ENCODE measurements at regions of chr3 and their contacts with region 1.

Region 1: GRCh38 chr3:138881233-138881632 is 46.5 kb upstream of the PIK3CB start:
- DNase-seq: no peak
- ATAC-seq: no peak
- H3K4me3 ChIP-seq: no peak overlapping the region
- H3K4me3 Mint-ChIP-seq: no peak overlapping the region
- H3K27ac ChIP-seq: no peak overlapping the region
- H3K27ac Mint-ChIP-seq: no peak overlapping the region
- H3K4me1 ChIP-seq: peaks cover 0 to 3% of the 10 kb centered on the region in 2 experiments
- H3K4me1 Mint-ChIP-seq: peaks cover 0 to under 1% (median 0%) of the 10 kb centered on the region in 3 donors
- H3K27me3 ChIP-seq: peaks cover 0 to 3% of the 10 kb centered on the region in 2 experiments
- H3K27me3 Mint-ChIP-seq: no peaks in the 10 kb centered on the region

Region 2: GRCh38 chr3:138437281-138437680 is 444.0 kb before region 1 on chr3:
- CTCF ChIA-PET with region 1: interaction called in 1 of 2 experiments, 11 read pairs
- POLR2A ChIA-PET with region 1: no interaction called
- DNase-seq: no peak
- ATAC-seq: no peak
- H3K4me3 ChIP-seq: no peak overlapping the region
- H3K4me3 Mint-ChIP-seq: no peak overlapping the region
- H3K27ac ChIP-seq: no peak overlapping the region
- H3K27ac Mint-ChIP-seq: no peak overlapping the region
- H3K4me1 ChIP-seq: peaks cover 0 to 22% of the 10 kb centered on the region in 2 experiments
- H3K4me1 Mint-ChIP-seq: peaks cover 0 to 18% (median 16%) of the 10 kb centered on the region in 3 donors
- H3K27me3 ChIP-seq: peaks cover 5 to 60% of the 10 kb centered on the region in 2 experiments
- H3K27me3 Mint-ChIP-seq: peaks cover 37 to 49% of the 10 kb centered on the region in 2 donors

Region 3: GRCh38 chr3:139225548-139225947 is 344.3 kb after region 1 on chr3:
- CTCF ChIA-PET with region 1: no interaction called
- POLR2A ChIA-PET with region 1: no interaction called
- DNase-seq: no peak
- ATAC-seq: no peak
- H3K4me3 ChIP-seq: no peak overlapping the region
- H3K4me3 Mint-ChIP-seq: no peak overlapping the region
- H3K27ac ChIP-seq: no peak overlapping the region
- H3K27ac Mint-ChIP-seq: no peak overlapping the region
- H3K4me1 ChIP-seq: no peaks in the 10 kb centered on the region
- H3K4me1 Mint-ChIP-seq: no peaks in the 10 kb centered on the region
- H3K27me3 ChIP-seq: peaks cover 0 to 20% of the 10 kb centered on the region in 2 experiments
- H3K27me3 Mint-ChIP-seq: peaks cover 4 to 10% of the 10 kb centered on the region in 2 donors

Measured in T-cell (primary cell).